Adrenal gland (tissue), 19 donors: ENCODE measurements at regions of chr19 and their contacts with region 1.

Region 1: DNA sequence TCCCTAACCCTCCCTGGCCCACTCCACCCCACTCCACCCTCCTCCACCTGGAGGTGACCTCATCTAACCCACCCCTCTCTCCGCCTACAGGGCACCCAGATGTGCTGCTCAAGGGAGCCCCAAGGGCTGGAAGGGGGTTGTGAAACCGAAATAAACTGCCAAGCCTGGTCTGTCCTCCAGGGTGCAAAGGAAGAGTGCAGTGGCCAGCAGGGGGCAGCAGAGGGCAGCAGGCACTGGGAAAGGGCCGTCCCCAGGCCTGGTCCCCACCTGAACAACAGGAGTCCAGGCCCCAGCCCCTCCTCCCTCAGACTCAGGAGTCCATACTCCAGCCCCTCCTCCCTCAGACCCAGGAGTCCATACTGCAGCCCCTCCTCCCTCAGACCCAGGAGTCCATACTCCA is 8.4 kb upstream of the BCAM start:
- DNase-seq: peak; percentile 87 to 94 (median 89)
- H3K4me3 ChIP-seq: no peak overlapping the region
- H3K27ac ChIP-seq: no peak overlapping the region
- H3K4me1 ChIP-seq: no peaks in the 10 kb centered on the region
- H3K27me3 ChIP-seq: no peaks in the 10 kb centered on the region
- CTCF ChIP-seq: peak; percentile 93 to 99 (median 98)
- POLR2A ChIP-seq: no peak

Region 2: GRCh38 chr19:44557933-44558332 is 242.5 kb before region 1 on chr19:
- intact Hi-C with region 1: no loop called
- DNase-seq: no peak
- H3K4me3 ChIP-seq: no peak overlapping the region
- H3K27ac ChIP-seq: no peak overlapping the region
- H3K4me1 ChIP-seq: peaks cover 0 to 4% of the 10 kb centered on the region in 2 donors
- H3K27me3 ChIP-seq: no peaks in the 10 kb centered on the region
- CTCF ChIP-seq: no peak
- POLR2A ChIP-seq: no peak

Region 3: GRCh38 chr19:44635581-44636438 is 164.7 kb before region 1 on chr19:
- intact Hi-C with region 1: no loop called
- DNase-seq: no peak
- H3K4me3 ChIP-seq: no peak overlapping the region
- H3K27ac ChIP-seq: no peak overlapping the region
- H3K4me1 ChIP-seq: no peaks in the 10 kb centered on the region
- H3K27me3 ChIP-seq: no peaks in the 10 kb centered on the region
- CTCF ChIP-seq: no peak
- POLR2A ChIP-seq: no peak

Region 4: GRCh38 chr19:44764975-44765948 is 35.2 kb before region 1 on chr19:
- intact Hi-C with region 1: no loop called
- DNase-seq: peak in 6 of 7 donors; percentile 54 to 81 (median 80)
- H3K4me3 ChIP-seq: no peak overlapping the region
- H3K27ac ChIP-seq: peak overlapping the region in 3 of 5 donors; percentile 16 to 49 (median 18)
- H3K4me1 ChIP-seq: peaks cover 0 to 15% of the 10 kb centered on the region in 2 donors
- H3K27me3 ChIP-seq: no peaks in the 10 kb centered on the region
- CTCF ChIP-seq: no peak
- POLR2A ChIP-seq: no peak

Region 5: DNA sequence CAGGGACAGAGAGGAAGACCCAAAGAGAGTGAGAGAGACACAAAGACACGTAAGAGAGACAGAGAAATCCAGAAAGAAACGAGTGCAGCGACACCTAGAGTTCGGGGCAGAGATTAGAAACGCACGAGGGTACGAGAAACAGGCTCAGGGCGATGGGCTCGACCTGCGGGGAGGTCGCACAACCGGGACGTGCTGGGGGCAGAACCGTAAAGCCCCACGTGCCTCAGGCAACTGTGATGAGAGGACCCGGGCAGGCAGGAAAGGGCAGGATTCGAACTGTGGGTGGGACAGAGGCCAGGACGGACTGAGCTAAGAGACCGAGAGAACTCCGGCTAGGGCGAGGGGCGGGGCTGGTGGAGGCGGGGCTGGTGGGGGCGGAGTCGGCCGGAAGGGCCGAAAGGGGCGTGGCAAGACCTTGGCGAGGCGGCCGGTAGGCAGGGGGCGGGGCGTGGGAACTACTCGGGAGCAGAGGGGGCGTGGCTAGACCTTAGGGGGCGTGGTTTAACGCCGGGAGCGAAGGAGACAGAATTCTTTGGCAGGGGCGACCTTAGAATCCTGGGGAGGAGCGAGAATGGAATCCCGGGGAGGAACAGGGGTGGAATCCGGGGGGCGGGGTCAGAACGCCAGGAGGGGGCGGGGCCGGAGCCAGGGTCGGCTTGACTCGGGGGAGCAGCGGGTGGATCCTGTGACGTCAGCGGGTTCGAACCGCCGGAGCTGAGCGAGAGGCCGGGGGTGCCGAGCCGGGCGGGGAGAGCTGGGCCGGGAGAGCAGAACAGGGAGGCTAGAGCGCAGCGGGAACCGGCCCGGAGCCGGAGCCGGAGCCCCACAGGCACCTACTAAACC is 45.4 kb after region 1 on chr19 and contains the start of gene NECTIN2:
- intact Hi-C with region 1: loop called (anchors 2 to 5 kb)
- DNase-seq: peak; percentile 100
- H3K4me3 ChIP-seq: peak within 1 kb of the TSS; percentile 33 to 97 (median 84)
- H3K27ac ChIP-seq: peak within 1 kb of the TSS; percentile 49 to 99 (median 98)
- H3K4me1 ChIP-seq: peaks cover 36 to 45% of the 10 kb centered on the region in 2 donors
- H3K27me3 ChIP-seq: no peaks in the 10 kb centered on the region
- CTCF ChIP-seq: peak; percentile 58 to 93 (median 82)
- POLR2A ChIP-seq: peak; percentile 94 to 95
- total RNA-seq, gene NECTIN2: 97.7 to 243 (median 131) TPM